CD8-positive, alpha-beta T cell (primary cell): ENCODE measurements at regions of chr9 and their contacts with region 1.

Region 1: DNA sequence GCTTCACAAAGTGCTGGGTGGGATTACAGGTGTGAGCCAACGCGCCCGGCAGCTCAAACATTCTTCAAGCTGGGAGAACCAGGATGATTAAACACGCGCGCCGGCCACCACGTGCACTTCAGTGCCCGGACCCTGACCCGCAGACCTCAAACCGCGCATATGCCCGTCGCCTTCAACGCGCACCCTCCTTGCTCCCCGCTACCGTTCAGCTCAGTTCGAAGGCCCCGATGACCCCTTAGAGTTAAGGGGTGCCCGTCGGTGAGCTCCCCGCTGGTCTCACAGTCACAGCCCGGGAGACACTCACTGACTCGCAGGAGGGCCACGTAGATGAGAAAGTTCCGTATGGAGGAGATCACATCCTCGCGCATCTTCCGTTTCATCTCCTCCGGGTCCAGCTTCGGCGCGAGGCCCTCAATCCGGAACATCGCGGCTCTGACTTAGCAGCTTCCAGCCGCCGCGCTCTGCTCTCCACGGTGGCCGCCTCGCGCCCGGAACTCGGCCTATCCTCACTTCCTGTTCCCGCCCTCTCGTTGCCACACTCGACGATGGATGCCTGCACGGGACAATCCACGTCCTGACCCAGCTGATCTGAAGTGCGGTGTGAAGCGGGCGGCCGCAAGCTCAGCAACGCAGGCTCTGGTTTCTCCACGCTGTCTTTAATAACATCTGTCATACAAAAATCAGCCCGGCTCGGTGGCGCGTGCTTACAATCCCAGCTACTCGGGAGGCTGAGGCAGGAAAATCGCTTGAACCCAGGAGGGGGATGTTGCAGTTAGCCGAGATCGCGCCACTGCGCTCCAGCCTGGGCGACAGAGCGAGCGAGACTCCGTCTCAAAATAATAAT is at the start of gene TOMM5:
- DNase-seq: peak; percentile 73 to 96 (median 91)
- ATAC-seq: peak; percentile 95
- H3K4me3 ChIP-seq: peak within 1 kb of the TSS; percentile 96 to 98
- H3K4me3 Mint-ChIP-seq: peak within 1 kb of the TSS; percentile 99
- H3K27ac ChIP-seq: peak within 1 kb of the TSS; percentile 79 to 80
- H3K27ac Mint-ChIP-seq: peak within 1 kb of the TSS; percentile 93
- H3K4me1 ChIP-seq: peaks cover 18% of the 10 kb centered on the region
- H3K4me1 Mint-ChIP-seq: peaks cover 48% of the 10 kb centered on the region
- H3K27me3 ChIP-seq: no peaks in the 10 kb centered on the region
- H3K27me3 Mint-ChIP-seq: peaks cover 4% of the 10 kb centered on the region
- CTCF ChIP-seq: no peak
- total RNA-seq, gene TOMM5: 37.8 to 40.1 TPM

Region 2: GRCh38 chr9:37079370-37080164 is 512.8 kb before region 1 on chr9:
- CTCF ChIA-PET with region 1: no interaction called
- POLR2A ChIA-PET with region 1: no interaction called
- intact Hi-C with region 1: loop called in 1 of 2 experiments (anchors 5 kb)
- DNase-seq: peak; percentile 84 to 97 (median 92)
- ATAC-seq: peak; percentile 95
- H3K4me3 ChIP-seq: peak overlapping the region; percentile 61 to 81
- H3K4me3 Mint-ChIP-seq: peak overlapping the region; percentile 92
- H3K27ac ChIP-seq: peak overlapping the region; percentile 88 to 95
- H3K27ac Mint-ChIP-seq: peak overlapping the region; percentile 98
- H3K4me1 ChIP-seq: peaks cover 41% of the 10 kb centered on the region
- H3K4me1 Mint-ChIP-seq: peaks cover 42% of the 10 kb centered on the region
- H3K27me3 ChIP-seq: no peaks in the 10 kb centered on the region
- H3K27me3 Mint-ChIP-seq: no peaks in the 10 kb centered on the region
- CTCF ChIP-seq: no peak

Region 3: DNA sequence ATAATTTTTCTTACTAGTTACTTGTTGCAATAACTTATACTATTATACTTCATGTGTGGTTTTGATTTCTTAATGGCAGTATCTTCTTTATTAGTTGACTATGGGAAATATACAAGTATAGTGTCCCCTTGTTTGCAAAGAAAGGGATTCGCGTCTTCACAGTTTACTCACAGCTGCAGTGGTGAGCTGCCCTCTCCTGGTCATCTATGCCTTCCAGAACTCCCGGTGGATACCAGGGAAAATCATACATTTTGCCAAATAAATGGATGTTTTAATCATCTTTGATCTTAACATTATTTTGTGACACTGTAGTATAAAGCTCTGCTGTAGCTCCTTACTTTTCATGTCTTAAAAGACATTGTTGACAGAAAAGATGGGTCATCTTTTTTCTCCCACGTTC is 329.9 kb before region 1 on chr9:
- CTCF ChIA-PET with region 1: no interaction called
- POLR2A ChIA-PET with region 1: no interaction called
- intact Hi-C with region 1: no loop called
- DNase-seq: peak in 2 of 9 experiments; percentile 3 to 6
- ATAC-seq: no peak
- H3K4me3 ChIP-seq: no peak overlapping the region
- H3K4me3 Mint-ChIP-seq: no peak overlapping the region
- H3K27ac ChIP-seq: no peak overlapping the region
- H3K27ac Mint-ChIP-seq: no peak overlapping the region
- H3K4me1 ChIP-seq: no peaks in the 10 kb centered on the region
- H3K4me1 Mint-ChIP-seq: peaks cover 16% of the 10 kb centered on the region
- H3K27me3 ChIP-seq: no peaks in the 10 kb centered on the region
- H3K27me3 Mint-ChIP-seq: no peaks in the 10 kb centered on the region
- CTCF ChIP-seq: no peak

Region 4: GRCh38 chr9:37422289-37423104 is 169.8 kb before region 1 on chr9 and contains the start of gene GRHPR:
- CTCF ChIA-PET with region 1: interaction called, 3 read pairs
- POLR2A ChIA-PET with region 1: no interaction called
- intact Hi-C with region 1: loop called (anchors 2 to 5 kb)
- DNase-seq: peak; percentile 73 to 94 (median 88)
- ATAC-seq: peak; percentile 98
- H3K4me3 ChIP-seq: peak within 1 kb of the TSS; percentile 90 to 96
- H3K4me3 Mint-ChIP-seq: peak within 1 kb of the TSS; percentile 96
- H3K27ac ChIP-seq: peak within 1 kb of the TSS; percentile 76 to 82
- H3K27ac Mint-ChIP-seq: peak within 1 kb of the TSS; percentile 93
- H3K4me1 ChIP-seq: peaks cover 20% of the 10 kb centered on the region
- H3K4me1 Mint-ChIP-seq: peaks cover 28% of the 10 kb centered on the region
- H3K27me3 ChIP-seq: no peaks in the 10 kb centered on the region
- H3K27me3 Mint-ChIP-seq: no peaks in the 10 kb centered on the region
- CTCF ChIP-seq: no peak
- total RNA-seq, gene GRHPR: 25.5 to 25.8 TPM

Region 5: GRCh38 chr9:37534901-37535300 is 57.4 kb before region 1 on chr9:
- CTCF ChIA-PET with region 1: no interaction called
- POLR2A ChIA-PET with region 1: no interaction called
- intact Hi-C with region 1: loop called in 1 of 2 experiments (anchors 5 kb)
- DNase-seq: no peak
- ATAC-seq: no peak
- H3K4me3 ChIP-seq: no peak overlapping the region
- H3K4me3 Mint-ChIP-seq: no peak overlapping the region
- H3K27ac ChIP-seq: no peak overlapping the region
- H3K27ac Mint-ChIP-seq: no peak overlapping the region
- H3K4me1 ChIP-seq: no peaks in the 10 kb centered on the region
- H3K4me1 Mint-ChIP-seq: peaks cover 2% of the 10 kb centered on the region
- H3K27me3 ChIP-seq: no peaks in the 10 kb centered on the region
- H3K27me3 Mint-ChIP-seq: no peaks in the 10 kb centered on the region
- CTCF ChIP-seq: no peak

Region 6: DNA sequence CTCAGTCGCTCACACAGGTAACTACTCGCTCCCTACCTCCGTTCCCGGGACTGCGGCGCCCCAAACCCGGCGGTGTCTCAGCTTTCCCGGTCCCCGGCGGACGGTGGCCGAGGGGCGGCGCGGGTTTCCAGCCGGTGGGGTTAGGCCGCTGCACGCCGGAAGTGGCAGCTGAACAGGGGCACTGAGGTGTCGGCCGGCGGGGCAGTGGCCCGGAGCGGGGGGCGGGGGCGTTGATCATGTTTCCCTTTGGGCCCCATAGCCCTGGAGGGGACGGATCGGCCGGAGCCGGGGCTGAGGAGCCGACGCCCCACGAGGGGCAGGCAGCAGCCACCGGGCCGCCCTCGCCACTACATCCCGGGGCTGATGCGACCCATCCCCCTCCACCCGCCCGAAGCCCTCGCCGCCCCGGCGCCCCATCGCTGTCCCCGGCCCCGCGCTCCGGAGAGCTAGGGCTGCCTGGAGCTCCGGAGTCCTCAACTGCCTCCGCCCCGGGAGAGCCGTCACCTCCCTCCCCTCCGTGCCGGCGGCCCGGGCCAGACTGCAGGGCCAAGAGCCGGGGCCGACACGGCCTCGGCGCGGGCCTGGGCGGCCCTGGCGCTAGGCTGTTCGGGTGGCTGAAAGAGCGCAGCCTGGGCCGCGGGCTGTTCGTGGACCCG is 208.4 kb after region 1 on chr9 and contains the start of gene DCAF10:
- CTCF ChIA-PET with region 1: no interaction called
- POLR2A ChIA-PET with region 1: no interaction called
- intact Hi-C with region 1: loop called (anchors 2 to 5 kb)
- DNase-seq: peak; percentile 81 to 95 (median 88)
- ATAC-seq: peak; percentile 86
- H3K4me3 ChIP-seq: peak within 1 kb of the TSS; percentile 83 to 97
- H3K4me3 Mint-ChIP-seq: peak within 1 kb of the TSS; percentile 94
- H3K27ac ChIP-seq: peak within 1 kb of the TSS; percentile 69 to 77
- H3K27ac Mint-ChIP-seq: peak within 1 kb of the TSS; percentile 86
- H3K4me1 ChIP-seq: peaks cover 27% of the 10 kb centered on the region
- H3K4me1 Mint-ChIP-seq: peaks cover 40% of the 10 kb centered on the region
- H3K27me3 ChIP-seq: no peaks in the 10 kb centered on the region
- H3K27me3 Mint-ChIP-seq: no peaks in the 10 kb centered on the region
- CTCF ChIP-seq: no peak
- total RNA-seq, gene DCAF10: 4.9 to 5.6 TPM

Region 7: GRCh38 chr9:38079461-38080031 is 487.2 kb after region 1 on chr9:
- CTCF ChIA-PET with region 1: no interaction called
- POLR2A ChIA-PET with region 1: no interaction called
- intact Hi-C with region 1: loop called (anchors 5 to 10 kb)
- DNase-seq: peak in 1 of 9 experiments; percentile 25
- ATAC-seq: no peak
- H3K4me3 ChIP-seq: no peak overlapping the region
- H3K4me3 Mint-ChIP-seq: no peak overlapping the region
- H3K27ac ChIP-seq: no peak overlapping the region
- H3K27ac Mint-ChIP-seq: no peak overlapping the region
- H3K4me1 ChIP-seq: no peaks in the 10 kb centered on the region
- H3K4me1 Mint-ChIP-seq: peaks cover 4% of the 10 kb centered on the region
- H3K27me3 ChIP-seq: no peaks in the 10 kb centered on the region
- H3K27me3 Mint-ChIP-seq: peaks cover 22% of the 10 kb centered on the region
- CTCF ChIP-seq: no peak